Right lobe of liver (tissue), 6 donors: ENCODE measurements at regions of chr1 and their contacts with region 1.

Region 1: GRCh38 chr1:108828022-108828961 is 28.6 kb downstream of the AKNAD1 start:
- DNase-seq: peak; percentile 65 to 71 (median 67)
- ATAC-seq: peak; percentile 61 to 78 (median 74)
- H3K4me3 ChIP-seq: no peak overlapping the region
- H3K27ac ChIP-seq: no peak overlapping the region
- H3K4me1 ChIP-seq: peaks cover 0 to 9% (median 2%) of the 10 kb centered on the region in 4 donors
- H3K27me3 ChIP-seq: no peaks in the 10 kb centered on the region
- CTCF ChIP-seq: peak; percentile 66 to 84 (median 72)
- POLR2A ChIP-seq: no peak

Region 2: GRCh38 chr1:108881369-108881768 is 53.1 kb after region 1 on chr1:
- intact Hi-C with region 1: loop called in 1 of 2 experiments (anchors 10 kb)
- DNase-seq: no peak
- ATAC-seq: no peak
- H3K4me3 ChIP-seq: no peak overlapping the region
- H3K27ac ChIP-seq: no peak overlapping the region
- H3K4me1 ChIP-seq: no peaks in the 10 kb centered on the region
- H3K27me3 ChIP-seq: no peaks in the 10 kb centered on the region
- CTCF ChIP-seq: no peak
- POLR2A ChIP-seq: no peak

Region 3: GRCh38 chr1:108897865-108898720 is 69.8 kb after region 1 on chr1:
- intact Hi-C with region 1: loop called in 1 of 2 experiments (anchors 5 kb)
- DNase-seq: no peak
- ATAC-seq: peak; percentile 78 to 91 (median 84)
- H3K4me3 ChIP-seq: no peak overlapping the region
- H3K27ac ChIP-seq: no peak overlapping the region
- H3K4me1 ChIP-seq: no peaks in the 10 kb centered on the region
- H3K27me3 ChIP-seq: no peaks in the 10 kb centered on the region
- CTCF ChIP-seq: peak; percentile 70 to 78 (median 74)
- POLR2A ChIP-seq: no peak